HEK293 (cell line): ENCODE measurements at regions of chr13 and their contacts with region 1.

Region 1: DNA sequence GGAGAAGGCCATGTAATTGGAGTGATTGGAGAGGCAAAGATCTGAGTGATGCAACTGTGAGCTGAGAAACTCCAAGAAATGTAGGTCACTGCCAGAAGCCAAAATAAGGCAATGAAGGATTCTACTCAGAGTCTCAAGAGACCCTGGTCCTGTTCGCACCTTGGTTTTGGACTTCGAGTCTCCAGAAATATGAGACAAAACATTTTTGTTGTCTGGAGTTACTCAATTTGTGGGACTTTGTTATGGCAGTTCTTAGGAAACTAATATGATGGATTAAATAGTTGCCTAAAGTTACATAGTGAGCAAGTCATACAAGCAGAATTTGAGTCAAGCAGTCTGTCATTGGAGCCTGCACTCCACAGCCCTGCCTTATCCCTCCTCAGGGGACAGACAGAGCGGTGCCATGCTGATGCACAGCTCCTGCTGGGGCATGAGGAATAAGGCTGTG is 104.2 kb downstream of the ITGBL1 start:
- H3K4me3 ChIP-seq: no peak overlapping the region
- H3K27ac ChIP-seq: no peak overlapping the region
- H3K4me1 ChIP-seq: no peaks in the 10 kb centered on the region; the same call in 1 of the 2 replicates
- CTCF ChIP-seq: no peak

Region 2: GRCh38 chr13:101492251-101492910 is 64.3 kb before region 1 on chr13:
- CTCF ChIA-PET with region 1: no interaction called
- POLR2A ChIA-PET with region 1: interaction called, 10 read pairs
- H3K4me3 ChIP-seq: no peak overlapping the region
- H3K27ac ChIP-seq: no peak overlapping the region
- H3K4me1 ChIP-seq: no peaks in the 10 kb centered on the region
- CTCF ChIP-seq: no peak